Lower leg skin (tissue), 4 donors: ENCODE measurements at regions of chr16 and their contacts with region 1.

Region 1: GRCh38 chr16:17459530-17460521 is 10.9 kb downstream of the XYLT1 start:
- DNase-seq: no peak
- H3K4me3 ChIP-seq: no peak overlapping the region
- CTCF ChIP-seq: no peak
- POLR2A ChIP-seq: no peak

Region 2: DNA sequence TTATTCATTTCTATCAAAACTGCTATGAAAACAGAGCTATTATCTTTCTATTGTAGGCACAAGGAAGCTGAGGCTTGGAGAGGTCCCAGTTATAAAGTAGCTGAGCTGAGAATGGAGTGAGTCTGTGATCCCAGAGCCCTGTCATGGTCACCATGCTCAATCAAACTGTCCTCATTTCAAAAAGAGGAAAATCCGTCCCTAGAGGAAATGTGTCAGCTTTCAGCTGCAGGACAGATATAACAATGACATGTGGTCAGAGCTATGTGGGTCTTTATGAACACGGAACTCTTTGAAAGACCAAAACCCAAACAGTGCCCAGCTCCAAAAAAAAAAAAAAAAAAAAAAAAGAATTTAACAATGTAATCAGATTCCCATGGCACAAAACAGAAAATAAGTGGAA is 255.2 kb before region 1 on chr16:
- intact Hi-C with region 1: loop called (anchors 5 kb)
- DNase-seq: no peak
- H3K4me3 ChIP-seq: no peak overlapping the region
- CTCF ChIP-seq: no peak
- POLR2A ChIP-seq: no peak

Region 3: GRCh38 chr16:17409894-17410293 is 49.9 kb before region 1 on chr16:
- intact Hi-C with region 1: loop called (anchors 2 kb)
- DNase-seq: no peak
- H3K4me3 ChIP-seq: no peak overlapping the region
- CTCF ChIP-seq: no peak
- POLR2A ChIP-seq: no peak

Region 4: GRCh38 chr16:17544785-17545184 is 85.0 kb after region 1 on chr16:
- intact Hi-C with region 1: no loop called
- DNase-seq: peak in 1 of 2 donors; percentile 12
- H3K4me3 ChIP-seq: no peak overlapping the region
- CTCF ChIP-seq: no peak
- POLR2A ChIP-seq: no peak